ENCODE measurements at regions of chr1 and their contacts with region 1.

Region 1: DNA sequence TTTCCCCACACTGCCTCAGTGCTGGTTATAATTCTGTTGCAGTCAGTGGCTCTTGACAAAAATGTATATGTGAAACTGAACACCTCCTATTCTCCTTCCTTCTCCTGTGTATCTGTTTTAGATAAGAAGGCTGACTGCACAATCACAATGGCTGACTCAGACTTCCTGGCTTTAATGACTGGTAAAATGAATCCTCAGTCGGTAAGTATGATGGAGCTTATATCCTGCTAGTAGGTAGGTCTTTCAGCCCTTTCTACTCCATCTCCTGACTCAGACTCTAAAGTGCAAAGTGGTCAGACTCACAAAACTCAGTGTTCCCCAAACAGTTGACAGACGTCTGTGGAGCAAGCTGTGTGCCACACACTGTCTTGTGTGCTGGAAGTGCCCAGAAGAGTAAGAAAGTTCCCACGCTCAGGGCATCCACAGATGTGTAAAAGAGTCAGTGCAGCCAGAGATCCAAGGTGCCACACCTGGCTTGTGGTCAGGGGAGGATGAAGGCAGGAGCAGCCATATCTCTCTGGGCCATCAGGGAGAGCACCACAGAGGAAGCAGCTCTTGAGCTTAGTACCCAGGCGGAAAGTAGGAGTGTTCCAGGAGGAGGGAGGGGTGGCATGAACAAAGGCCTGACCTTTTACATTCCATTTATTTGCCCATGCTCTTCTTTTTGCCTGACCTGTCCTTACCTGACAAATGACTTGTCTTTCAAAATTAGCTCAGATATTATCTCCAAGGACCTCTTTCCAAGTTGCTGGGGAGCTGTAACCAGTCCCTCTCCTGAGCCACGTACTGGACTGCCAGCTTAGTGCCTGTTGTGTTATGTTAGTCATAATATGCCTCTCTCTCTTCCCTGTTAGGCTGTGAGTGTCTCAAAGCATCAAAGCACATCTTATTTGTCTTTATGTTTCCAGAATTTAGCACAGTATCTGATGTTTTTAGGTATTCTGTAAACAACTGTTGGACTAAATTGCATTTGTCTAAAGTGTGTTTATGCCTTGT is 14.0 kb upstream of the PODN start:
- DNase-seq: no peak
- ATAC-seq: peak; percentile 61
- H3K4me3 ChIP-seq: no peak overlapping the region
- H3K27ac ChIP-seq: peak overlapping the region; percentile 26
- H3K4me1 ChIP-seq: peaks cover 17% of the 10 kb centered on the region
- H3K27me3 ChIP-seq: no peaks in the 10 kb centered on the region
- CTCF ChIP-seq: no peak

Region 2: GRCh38 chr1:52621950-52622349 is 426.1 kb before region 1 on chr1:
- CTCF ChIA-PET with region 1: no interaction called
- POLR2A ChIA-PET with region 1: interaction called, 12 read pairs
- in situ Hi-C with region 1: no loop called
- intact Hi-C with region 1: no loop called
- DNase-seq: no peak
- ATAC-seq: no peak
- H3K4me3 ChIP-seq: no peak overlapping the region
- H3K27ac ChIP-seq: no peak overlapping the region
- H3K4me1 ChIP-seq: no peaks in the 10 kb centered on the region
- H3K27me3 ChIP-seq: no peaks in the 10 kb centered on the region
- CTCF ChIP-seq: no peak

Region 3: DNA sequence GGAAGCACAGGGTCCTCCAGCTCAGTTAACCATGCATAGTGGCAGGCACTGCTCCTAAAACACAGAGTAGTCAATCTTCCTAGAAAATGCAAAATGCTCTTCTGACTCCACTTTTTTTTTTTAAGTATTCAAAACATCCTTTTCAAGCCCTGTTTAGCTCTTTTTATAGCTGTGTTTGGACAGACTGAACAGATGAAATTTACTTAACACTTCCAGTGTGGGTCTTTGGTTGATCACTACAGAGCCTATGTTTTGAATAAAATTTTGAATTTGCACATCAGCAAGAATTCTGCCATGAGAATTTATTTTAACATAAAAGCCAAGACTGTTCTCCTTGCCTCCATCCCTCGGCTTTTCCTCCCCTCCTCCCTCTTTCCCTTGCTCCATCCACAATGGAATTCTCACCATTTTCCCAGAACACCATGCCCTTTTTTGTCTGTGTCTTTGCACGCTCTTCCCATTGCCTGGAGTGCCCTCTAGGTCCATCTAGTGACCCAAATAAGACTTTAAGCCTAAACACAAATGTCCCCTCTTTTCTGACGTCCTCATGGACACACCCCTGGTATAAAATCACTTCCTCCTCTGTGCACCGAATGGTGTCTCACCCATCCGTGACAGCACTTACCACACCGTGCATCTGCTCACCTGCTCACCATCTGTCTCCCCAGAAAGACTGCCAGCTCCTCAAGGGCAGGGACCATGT is 124.5 kb after region 1 on chr1:
- CTCF ChIA-PET with region 1: no interaction called
- POLR2A ChIA-PET with region 1: no interaction called
- in situ Hi-C with region 1: no loop called
- intact Hi-C with region 1: loop called (anchors 10 kb)
- DNase-seq: no peak
- ATAC-seq: 0 out of 2 replicates have a peak, but pooled peaks have one; percentile 20
- H3K4me3 ChIP-seq: no peak overlapping the region
- H3K27ac ChIP-seq: no peak overlapping the region
- H3K4me1 ChIP-seq: peaks cover 15% of the 10 kb centered on the region
- H3K27me3 ChIP-seq: no peaks in the 10 kb centered on the region
- CTCF ChIP-seq: peak; percentile 61

Measured in Panc1 (cell line).